MCF 10A (cell line): ENCODE measurements at regions of chr14 and their contacts with region 1.

Region 1: GRCh38 chr14:50542941-50543418 is 10.6 kb upstream of the MAP4K5 start:
- DNase-seq: peak; percentile 64
- H3K4me3 Mint-ChIP-seq: no peak overlapping the region
- H3K27ac Mint-ChIP-seq: no peak overlapping the region
- H3K4me1 Mint-ChIP-seq: peaks cover 19% of the 10 kb centered on the region
- H3K27me3 Mint-ChIP-seq: no peaks in the 10 kb centered on the region
- CTCF ChIP-seq: peak; percentile 61

Region 2: GRCh38 chr14:50559990-50560930 is 17.3 kb after region 1 on chr14 and contains the start of gene ATL1:
- CTCF ChIA-PET with region 1: interaction called, 20 read pairs
- POLR2A ChIA-PET with region 1: interaction called, 25 read pairs
- intact Hi-C with region 1: no loop called
- DNase-seq: peak; percentile 77
- H3K4me3 Mint-ChIP-seq: peak within 1 kb of the TSS; percentile 88
- H3K27ac Mint-ChIP-seq: peak within 1 kb of the TSS; percentile 93
- H3K4me1 Mint-ChIP-seq: peaks cover 10% of the 10 kb centered on the region
- H3K27me3 Mint-ChIP-seq: no peaks in the 10 kb centered on the region
- CTCF ChIP-seq: no peak
- total RNA-seq, gene ATL1: 3.2 and 3.3 TPM in 2 replicates

Region 3: DNA sequence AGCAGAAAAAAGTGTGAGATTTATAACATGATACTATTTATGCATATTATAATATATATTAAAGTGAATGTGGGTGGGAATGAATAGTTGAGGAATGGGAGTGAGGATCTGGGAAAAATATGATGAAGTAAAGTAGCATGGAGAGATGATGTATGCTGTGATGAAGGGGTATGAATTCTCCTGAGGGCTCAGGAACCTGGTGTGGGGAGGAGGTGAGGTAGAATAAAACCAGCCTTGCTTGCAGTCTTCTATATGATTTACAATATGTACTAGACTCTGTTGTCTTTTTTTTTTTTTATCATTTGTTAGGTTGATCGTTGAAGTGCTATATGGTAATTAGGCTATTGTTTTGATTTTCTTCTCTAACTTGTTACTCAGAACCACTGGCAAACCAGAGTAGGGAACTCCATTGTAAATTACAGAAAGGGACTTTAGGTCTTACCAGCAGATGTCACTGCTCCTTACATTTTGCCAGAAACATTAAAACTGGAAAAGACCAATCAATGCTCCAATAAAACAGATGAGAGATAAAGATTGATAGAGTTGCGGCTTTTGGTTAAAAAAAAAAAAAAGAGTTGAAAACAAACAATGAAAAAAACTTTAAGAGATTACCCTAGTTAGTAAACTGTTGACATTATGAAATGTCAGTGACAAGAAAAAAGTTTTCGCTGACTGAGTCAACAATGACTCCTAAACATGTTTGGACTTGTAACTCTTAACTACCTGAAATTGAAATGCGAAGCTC is 56.9 kb after region 1 on chr14:
- CTCF ChIA-PET with region 1: interaction called, 5 read pairs
- POLR2A ChIA-PET with region 1: interaction called, 11 read pairs
- intact Hi-C with region 1: loop called (anchors 1 kb)
- DNase-seq: peak; percentile 72
- H3K4me3 Mint-ChIP-seq: peak overlapping the region; percentile 59
- H3K27ac Mint-ChIP-seq: peak overlapping the region; percentile 98
- H3K4me1 Mint-ChIP-seq: peaks cover 43% of the 10 kb centered on the region
- H3K27me3 Mint-ChIP-seq: no peaks in the 10 kb centered on the region
- CTCF ChIP-seq: peak; percentile 37

Region 4: GRCh38 chr14:50619556-50620141 is 76.7 kb after region 1 on chr14:
- CTCF ChIA-PET with region 1: interaction called, 5 read pairs
- POLR2A ChIA-PET with region 1: interaction called, 3 read pairs
- intact Hi-C with region 1: loop called (anchors 1 kb)
- DNase-seq: peak; percentile 43
- H3K4me3 Mint-ChIP-seq: no peak overlapping the region
- H3K27ac Mint-ChIP-seq: no peak overlapping the region
- H3K4me1 Mint-ChIP-seq: peaks cover 7% of the 10 kb centered on the region
- H3K27me3 Mint-ChIP-seq: no peaks in the 10 kb centered on the region
- CTCF ChIP-seq: peak; percentile 57

Region 5: DNA sequence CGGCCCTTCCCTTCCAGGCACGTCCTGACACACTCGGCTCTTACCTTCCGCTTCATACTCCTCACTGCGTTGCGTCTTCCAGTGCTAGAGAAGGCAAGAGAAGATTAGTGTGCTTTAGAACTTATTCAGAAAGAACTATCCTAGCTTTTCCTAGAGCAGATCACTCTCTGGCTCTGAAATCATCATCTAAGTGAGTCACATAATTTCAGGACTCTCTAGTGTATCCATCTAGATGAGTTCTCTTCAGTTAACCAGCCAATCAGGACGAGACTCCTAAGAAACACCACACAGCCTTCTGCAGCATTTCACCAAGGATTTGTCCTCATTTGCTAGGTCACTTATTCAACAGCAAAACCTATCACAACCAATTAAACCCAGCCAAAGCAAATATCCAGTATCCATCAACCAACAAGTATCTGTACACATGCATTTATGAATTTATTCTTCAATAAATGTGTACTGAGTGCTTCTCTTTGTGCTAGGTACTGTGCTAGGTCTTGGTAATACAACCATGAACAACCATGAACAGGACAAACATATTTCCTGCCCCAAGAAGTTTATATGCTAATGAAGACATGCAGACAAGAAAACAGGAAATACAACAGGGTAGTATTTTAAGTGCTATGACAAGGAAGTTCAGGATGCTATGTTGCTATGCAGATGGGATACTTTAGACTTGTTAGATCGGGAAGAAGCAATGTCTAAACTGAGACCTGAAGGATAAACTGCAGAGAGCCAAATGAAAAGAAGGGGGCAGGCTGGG is 235.9 kb after region 1 on chr14:
- CTCF ChIA-PET with region 1: interaction called, 233 read pairs
- POLR2A ChIA-PET with region 1: interaction called, 10 read pairs
- intact Hi-C with region 1: loop called (anchors 1 kb)
- DNase-seq: no peak
- H3K4me3 Mint-ChIP-seq: no peak overlapping the region
- H3K27ac Mint-ChIP-seq: peak overlapping the region; percentile 22
- H3K4me1 Mint-ChIP-seq: peaks cover 29% of the 10 kb centered on the region
- H3K27me3 Mint-ChIP-seq: no peaks in the 10 kb centered on the region
- CTCF ChIP-seq: no peak

Region 6: GRCh38 chr14:50785457-50786063 is 242.6 kb after region 1 on chr14:
- CTCF ChIA-PET with region 1: interaction called, 10 read pairs
- POLR2A ChIA-PET with region 1: interaction called, 3 read pairs
- intact Hi-C with region 1: no loop called
- DNase-seq: no peak
- H3K4me3 Mint-ChIP-seq: no peak overlapping the region
- H3K27ac Mint-ChIP-seq: no peak overlapping the region
- H3K4me1 Mint-ChIP-seq: no peaks in the 10 kb centered on the region
- H3K27me3 Mint-ChIP-seq: no peaks in the 10 kb centered on the region
- CTCF ChIP-seq: no peak